HCT116 (cell line): ENCODE measurements at regions of chr14 and their contacts with region 1.

Region 1: GRCh38 chr14:21917699-21918436 is 244.2 kb upstream of the OR4E1 start:
- DNase-seq: peak; percentile 31
- ATAC-seq: peak; percentile 71
- H3K4me3 ChIP-seq: no peak overlapping the region
- H3K27ac ChIP-seq: no peak overlapping the region
- H3K4me1 ChIP-seq: no peaks in the 10 kb centered on the region
- H3K27me3 ChIP-seq: no peaks in the 10 kb centered on the region; the same call in 1 of the 2 replicates
- CTCF ChIP-seq: peak; percentile 32 to 89 (median 78); a peak in 5 of 6 replicates
- POLR2A ChIP-seq: no peak
- RAD21 ChIP-seq: peak; percentile 41

Region 2: GRCh38 chr14:21902650-21903103 is 15.2 kb before region 1 on chr14:
- CTCF ChIA-PET with region 1: interaction called, 12 read pairs
- POLR2A ChIA-PET with region 1: no interaction called
- RAD21 ChIA-PET with region 1: no interaction called
- intact Hi-C with region 1: no loop called
- DNase-seq: no peak
- ATAC-seq: no peak; the same call in 1 of the 2 replicates
- H3K4me3 ChIP-seq: no peak overlapping the region
- H3K27ac ChIP-seq: no peak overlapping the region
- H3K4me1 ChIP-seq: no peaks in the 10 kb centered on the region
- H3K27me3 ChIP-seq: no peaks in the 10 kb centered on the region; the same call in 1 of the 2 replicates
- CTCF ChIP-seq: peak in 2 of 3 experiments; percentile 46 to 47; a peak in 3 of 6 replicates
- POLR2A ChIP-seq: no peak
- RAD21 ChIP-seq: no peak

Region 3: GRCh38 chr14:21933681-21934080 is 15.8 kb after region 1 on chr14:
- CTCF ChIA-PET with region 1: interaction called, 17 read pairs
- POLR2A ChIA-PET with region 1: no interaction called
- RAD21 ChIA-PET with region 1: no interaction called
- intact Hi-C with region 1: no loop called
- DNase-seq: no peak
- ATAC-seq: no peak
- H3K4me3 ChIP-seq: no peak overlapping the region
- H3K27ac ChIP-seq: no peak overlapping the region
- H3K4me1 ChIP-seq: no peaks in the 10 kb centered on the region
- H3K27me3 ChIP-seq: 0 out of 2 replicates have a peak, but pooled peaks cover 6% of the 10 kb centered on the region
- CTCF ChIP-seq: peak; percentile 9 to 31 (median 30); a peak in 5 of 6 replicates
- POLR2A ChIP-seq: no peak
- RAD21 ChIP-seq: no peak

Region 4: DNA sequence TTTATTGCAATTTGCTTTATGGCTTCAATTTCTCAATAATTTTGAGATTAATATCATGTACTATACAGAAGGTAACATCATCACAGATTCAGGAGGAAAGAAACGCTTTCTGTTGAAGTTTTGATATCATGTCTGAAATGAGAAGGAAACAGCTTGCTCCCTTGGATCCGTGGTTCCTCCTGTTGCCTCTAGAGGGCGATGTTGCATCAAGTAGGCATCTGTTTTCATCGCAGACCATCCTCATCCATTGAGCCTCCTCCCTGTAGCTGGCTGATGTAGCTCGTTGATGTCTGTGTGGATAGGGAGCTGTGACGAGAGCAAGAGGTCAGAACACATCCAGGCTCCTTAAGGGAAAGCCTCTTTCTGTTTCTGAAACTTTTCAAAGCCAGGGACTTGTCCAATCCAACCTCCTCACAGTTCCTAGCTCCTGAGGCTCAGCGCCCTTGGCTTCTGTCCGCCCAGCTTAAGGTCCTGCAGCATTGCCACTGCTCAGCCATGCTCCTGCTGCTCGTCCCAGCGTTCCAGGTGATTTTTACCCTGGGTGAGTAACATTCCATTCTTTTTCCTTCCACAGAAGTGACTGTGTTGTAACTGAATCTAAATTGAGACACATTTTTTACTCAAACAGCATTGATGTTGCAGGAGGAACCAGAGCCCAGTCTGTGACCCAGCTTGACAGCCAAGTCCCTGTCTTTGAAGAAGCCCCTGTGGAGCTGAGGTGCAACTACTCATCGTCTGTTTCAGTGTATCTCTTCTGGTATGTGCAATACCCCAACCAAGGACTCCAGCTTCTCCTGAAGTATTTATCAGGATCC is 60.5 kb after region 1 on chr14:
- CTCF ChIA-PET with region 1: interaction called, 14 read pairs
- POLR2A ChIA-PET with region 1: no interaction called
- RAD21 ChIA-PET with region 1: no interaction called
- intact Hi-C with region 1: no loop called
- DNase-seq: peak; percentile 16
- ATAC-seq: peak; percentile 78
- H3K4me3 ChIP-seq: no peak overlapping the region
- H3K27ac ChIP-seq: no peak overlapping the region
- H3K4me1 ChIP-seq: no peaks in the 10 kb centered on the region
- H3K27me3 ChIP-seq: peaks cover 26% of the 10 kb centered on the region
- CTCF ChIP-seq: peak in 2 of 3 experiments; percentile 93 to 94; a peak in 4 of 6 replicates
- POLR2A ChIP-seq: no peak
- RAD21 ChIP-seq: peak; percentile 31; the same call in 1 of the 2 replicates

Region 5: GRCh38 chr14:21997300-21997699 is 79.4 kb after region 1 on chr14:
- CTCF ChIA-PET with region 1: interaction called, 14 read pairs
- POLR2A ChIA-PET with region 1: no interaction called
- RAD21 ChIA-PET with region 1: no interaction called
- intact Hi-C with region 1: no loop called
- DNase-seq: peak; percentile 31
- ATAC-seq: peak; percentile 94
- H3K4me3 ChIP-seq: no peak overlapping the region
- H3K27ac ChIP-seq: no peak overlapping the region
- H3K4me1 ChIP-seq: no peaks in the 10 kb centered on the region
- H3K27me3 ChIP-seq: peaks cover 5% of the 10 kb centered on the region; the same call in 1 of the 2 replicates
- CTCF ChIP-seq: peak; percentile 8 to 42 (median 37); a peak in 4 of 6 replicates
- POLR2A ChIP-seq: no peak
- RAD21 ChIP-seq: no peak

Region 6: GRCh38 chr14:22089940-22090339 is 172.1 kb after region 1 on chr14:
- CTCF ChIA-PET with region 1: no interaction called
- POLR2A ChIA-PET with region 1: no interaction called
- RAD21 ChIA-PET with region 1: no interaction called
- intact Hi-C with region 1: loop called (anchors 5 kb)
- DNase-seq: no peak
- ATAC-seq: no peak
- H3K4me3 ChIP-seq: no peak overlapping the region
- H3K27ac ChIP-seq: no peak overlapping the region
- H3K4me1 ChIP-seq: no peaks in the 10 kb centered on the region
- H3K27me3 ChIP-seq: no peaks in the 10 kb centered on the region; the same call in 1 of the 2 replicates
- CTCF ChIP-seq: no peak
- POLR2A ChIP-seq: no peak
- RAD21 ChIP-seq: no peak